ENCODE measurements at regions of chr11 and their contacts with region 1.

Region 1: GRCh38 chr11:124673333-124674167 is at the starts of genes SIAE and SPA17:
- DNase-seq: peak; percentile 89 to 97 (median 94)
- H3K4me3 ChIP-seq: peak within 1 kb of the TSS; percentile 46 to 93 (median 72)
- H3K27ac ChIP-seq: peak within 1 kb of the TSS in 4 of 5 donors; percentile 58 to 85 (median 76)
- H3K4me1 ChIP-seq: peaks cover 12 to 14% of the 10 kb centered on the region in 2 donors
- H3K27me3 ChIP-seq: no peaks in the 10 kb centered on the region
- CTCF ChIP-seq: no peak
- POLR2A ChIP-seq: peak in 1 of 2 donors; percentile 27
- total RNA-seq, gene SIAE: 6.4 to 50.0 (median 30.3) TPM
- total RNA-seq, gene SPA17: 1.3 to 7.5 (median 2.8) TPM

Region 2: DNA sequence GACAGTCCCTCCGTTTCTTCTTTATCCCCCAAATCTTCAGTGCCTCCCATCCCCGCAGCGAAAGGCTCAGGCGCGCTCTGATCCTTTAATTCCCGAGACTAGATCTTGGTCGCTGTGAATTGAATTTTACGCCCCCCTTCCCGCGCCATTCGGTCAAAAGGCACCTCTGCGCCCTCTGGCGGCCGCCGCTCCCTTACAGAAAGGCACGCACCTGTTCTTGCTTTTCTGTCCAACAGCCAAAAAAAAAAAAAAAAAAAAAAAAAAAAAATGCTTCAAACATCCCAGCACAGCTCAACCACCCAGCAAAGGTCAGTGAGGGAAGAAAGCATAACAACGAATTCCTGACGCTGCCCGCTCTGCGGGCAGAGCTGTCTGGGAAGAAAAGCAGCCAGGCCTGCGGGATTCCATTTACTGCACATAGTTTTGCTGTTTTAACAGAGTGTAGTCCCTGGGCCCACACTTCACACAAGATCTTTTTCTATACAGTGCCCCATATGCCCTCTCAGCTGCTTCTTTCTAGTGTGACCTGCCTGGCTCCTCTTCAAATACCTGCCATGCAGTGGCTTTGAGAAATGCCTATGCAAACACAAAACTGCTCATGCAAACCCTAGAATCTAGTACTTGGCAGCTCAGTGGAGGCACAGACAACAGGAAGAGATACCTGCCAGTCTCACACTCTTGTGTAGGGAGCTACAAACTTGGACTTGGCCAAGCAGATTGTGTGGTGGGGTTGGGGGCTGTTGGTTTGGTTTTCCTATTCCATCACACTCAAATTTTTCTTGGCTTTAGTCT is 89.8 kb after region 1 on chr11:
- intact Hi-C with region 1: loop called (anchors 5 kb)
- DNase-seq: peak; percentile 70 to 89 (median 85)
- H3K4me3 ChIP-seq: peak overlapping the region in 2 of 4 donors; percentile 15 to 47
- H3K27ac ChIP-seq: peak overlapping the region in 1 of 5 donors; percentile 55
- H3K4me1 ChIP-seq: peaks cover 6 to 39% of the 10 kb centered on the region in 2 donors
- H3K27me3 ChIP-seq: peaks cover 38% of the 10 kb centered on the region
- CTCF ChIP-seq: peak; percentile 59 to 82 (median 74)
- POLR2A ChIP-seq: no peak

Region 3: DNA sequence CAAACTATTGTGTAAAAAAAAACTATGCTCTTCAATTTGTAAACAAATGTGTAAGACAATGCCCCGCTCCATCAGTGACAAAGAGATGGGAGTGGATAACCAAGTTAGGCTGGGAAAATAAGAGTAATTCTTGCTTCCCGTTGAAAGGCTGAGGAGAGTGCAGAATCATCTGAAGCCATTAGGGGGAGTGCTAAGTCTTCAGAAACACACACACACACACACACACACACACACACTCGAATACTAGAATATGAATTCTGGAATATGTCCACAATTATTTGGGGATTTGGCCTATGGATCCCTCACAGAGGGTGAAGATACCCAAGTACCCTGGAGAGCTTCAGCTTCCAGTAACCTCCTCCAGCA is 163.9 kb after region 1 on chr11:
- intact Hi-C with region 1: loop called (anchors 2 to 5 kb)
- DNase-seq: peak in 2 of 7 donors; percentile 19 to 24
- H3K4me3 ChIP-seq: no peak overlapping the region
- H3K27ac ChIP-seq: no peak overlapping the region
- H3K4me1 ChIP-seq: peaks cover 8 to 14% of the 10 kb centered on the region in 2 donors
- H3K27me3 ChIP-seq: peaks cover 56% of the 10 kb centered on the region
- CTCF ChIP-seq: peak in 1 of 6 experiments; percentile 46
- POLR2A ChIP-seq: no peak

Measured in adrenal gland (tissue), 19 donors.